ENCODE measurements at regions of chr2 and their contacts with region 1.

Region 1: GRCh38 chr2:81097361-81097760 is 792.8 kb upstream of the LRRTM1 start:
- DNase-seq: no peak
- ATAC-seq: no peak
- H3K4me3 ChIP-seq: no peak overlapping the region
- H3K27ac ChIP-seq: no peak overlapping the region
- H3K4me1 ChIP-seq: no peaks in the 10 kb centered on the region
- H3K27me3 ChIP-seq: no peaks in the 10 kb centered on the region
- CTCF ChIP-seq: no peak
- EP300 ChIP-seq: no peak
- POLR2A ChIP-seq: no peak
- RAD21 ChIP-seq: no peak

Region 2: GRCh38 chr2:80926168-80926567 is 171.2 kb before region 1 on chr2:
- CTCF ChIA-PET with region 1: no interaction called
- POLR2A ChIA-PET with region 1: no interaction called
- in situ Hi-C with region 1: no loop called
- intact Hi-C with region 1: no loop called
- DNase-seq: no peak
- ATAC-seq: no peak
- H3K4me3 ChIP-seq: no peak overlapping the region
- H3K27ac ChIP-seq: no peak overlapping the region
- H3K4me1 ChIP-seq: no peaks in the 10 kb centered on the region
- H3K27me3 ChIP-seq: no peaks in the 10 kb centered on the region
- CTCF ChIP-seq: no peak
- EP300 ChIP-seq: no peak
- POLR2A ChIP-seq: no peak
- RAD21 ChIP-seq: no peak

Region 3: DNA sequence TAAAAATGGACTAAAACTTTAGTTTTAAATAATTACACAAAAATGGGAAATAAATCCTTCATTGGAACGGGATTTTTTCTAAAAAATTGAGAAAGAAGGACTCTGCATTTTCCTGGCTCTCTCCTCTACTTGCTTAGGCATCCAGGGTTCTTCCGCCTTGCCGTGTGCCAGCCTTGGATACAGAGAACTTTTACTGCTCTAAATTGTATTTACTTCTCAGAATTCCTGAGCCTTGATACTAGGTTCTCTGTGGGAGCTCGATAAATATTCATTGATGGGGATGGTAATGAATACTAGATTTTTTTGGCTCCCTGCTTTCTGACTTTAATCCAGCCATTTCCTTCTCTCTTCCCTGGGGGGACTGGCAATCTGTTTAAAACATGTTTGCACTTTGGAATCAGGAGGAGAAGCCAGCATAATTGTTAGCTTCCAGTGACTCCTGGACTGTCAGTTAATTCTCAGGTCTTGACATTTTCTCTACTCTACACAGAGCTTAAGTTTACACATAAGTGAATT is 46.7 kb before region 1 on chr2:
- CTCF ChIA-PET with region 1: no interaction called
- POLR2A ChIA-PET with region 1: no interaction called
- in situ Hi-C with region 1: no loop called
- intact Hi-C with region 1: loop called (anchors 10 kb)
- DNase-seq: no peak
- ATAC-seq: no peak
- H3K4me3 ChIP-seq: no peak overlapping the region
- H3K27ac ChIP-seq: no peak overlapping the region
- H3K4me1 ChIP-seq: no peaks in the 10 kb centered on the region
- H3K27me3 ChIP-seq: no peaks in the 10 kb centered on the region
- CTCF ChIP-seq: no peak
- EP300 ChIP-seq: no peak
- POLR2A ChIP-seq: no peak
- RAD21 ChIP-seq: no peak